Activated CD4-positive, alpha-beta memory T cell treated with anti-CD3 and anti-CD28 coated beads for 36 hours (primary cell): ENCODE measurements at regions of chr10 and their contacts with region 1.

Region 1: DNA sequence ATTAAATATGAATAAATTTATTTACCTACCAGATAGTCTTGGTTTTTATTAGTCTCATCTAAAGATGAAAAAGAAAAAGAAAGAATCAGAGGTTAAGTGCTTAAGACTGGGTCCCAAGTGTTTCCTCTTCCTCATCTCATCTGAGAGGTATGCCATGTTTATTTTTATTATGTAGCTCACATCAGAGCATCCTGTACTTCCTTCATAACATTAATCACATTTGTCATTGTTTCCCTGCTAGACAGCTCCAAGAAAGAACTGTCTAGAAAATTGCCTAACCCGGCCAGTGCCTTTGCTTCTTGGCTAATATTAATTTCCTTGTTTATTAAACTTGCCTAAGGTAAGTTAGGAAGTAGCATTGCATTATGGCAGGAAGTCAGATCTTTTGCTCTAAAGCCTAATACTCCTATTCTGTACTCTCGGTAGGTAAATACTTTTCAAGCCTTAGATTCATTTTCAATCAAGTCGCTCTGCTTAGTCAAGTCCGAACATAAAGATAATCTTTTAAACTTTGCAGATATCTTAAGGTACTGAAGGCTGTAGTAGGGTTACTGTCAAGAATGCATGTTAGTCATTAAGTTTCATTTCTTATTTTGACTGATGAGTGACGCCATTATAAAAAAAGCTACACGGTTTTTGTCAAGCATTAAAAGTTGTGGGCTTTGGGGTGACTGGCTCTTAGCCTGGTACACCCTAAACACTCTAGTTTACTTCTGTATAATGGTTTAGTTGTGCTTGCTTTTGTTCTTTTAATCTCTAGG is 47.4 kb downstream of the ZMYND11 start:
- DNase-seq: peak; percentile 36
- H3K4me3 Mint-ChIP-seq: peak overlapping the region; percentile 24
- H3K27ac Mint-ChIP-seq: peak overlapping the region; percentile 80
- H3K4me1 Mint-ChIP-seq: peaks cover 36% of the 10 kb centered on the region
- H3K27me3 Mint-ChIP-seq: no peaks in the 10 kb centered on the region

Region 2: GRCh38 chr10:201328-201771 is 18.7 kb after region 1 on chr10:
- CTCF ChIA-PET with region 1: no interaction called
- POLR2A ChIA-PET with region 1: interaction called, 3 read pairs
- intact Hi-C with region 1: loop called (anchors 1 kb)
- DNase-seq: no peak
- H3K4me3 Mint-ChIP-seq: no peak overlapping the region
- H3K27ac Mint-ChIP-seq: peak overlapping the region; percentile 25
- H3K4me1 Mint-ChIP-seq: peaks cover 20% of the 10 kb centered on the region
- H3K27me3 Mint-ChIP-seq: no peaks in the 10 kb centered on the region

Region 3: DNA sequence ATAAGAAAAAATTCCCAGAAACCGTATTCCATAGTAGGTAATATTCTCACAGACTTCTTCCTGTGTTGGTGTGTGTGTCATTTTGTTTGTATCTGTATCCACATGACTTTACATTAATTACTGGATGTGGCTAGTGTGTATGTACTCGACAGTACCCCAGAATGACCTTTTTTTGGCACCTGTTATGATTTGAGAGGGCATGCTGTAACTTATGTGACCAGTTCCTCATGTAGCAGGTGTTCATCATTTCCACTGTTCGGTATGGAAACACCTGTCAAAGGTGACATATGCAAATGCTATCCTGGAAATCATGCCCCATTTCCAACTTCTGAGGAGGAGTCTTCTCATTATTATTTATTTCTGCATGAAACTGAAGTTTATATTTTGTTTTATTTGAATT is 42.0 kb after region 1 on chr10:
- CTCF ChIA-PET with region 1: interaction called, 5 read pairs
- POLR2A ChIA-PET with region 1: no interaction called
- intact Hi-C with region 1: loop called (anchors 5 kb)
- DNase-seq: no peak
- H3K4me3 Mint-ChIP-seq: no peak overlapping the region
- H3K27ac Mint-ChIP-seq: no peak overlapping the region
- H3K4me1 Mint-ChIP-seq: peaks cover 20% of the 10 kb centered on the region
- H3K27me3 Mint-ChIP-seq: no peaks in the 10 kb centered on the region

Region 4: GRCh38 chr10:329361-330099 is 146.9 kb after region 1 on chr10:
- CTCF ChIA-PET with region 1: interaction called, 3 read pairs
- POLR2A ChIA-PET with region 1: no interaction called
- intact Hi-C with region 1: loop called (anchors 5 kb)
- DNase-seq: peak; percentile 61
- H3K4me3 Mint-ChIP-seq: peak overlapping the region; percentile 33
- H3K27ac Mint-ChIP-seq: peak overlapping the region; percentile 60
- H3K4me1 Mint-ChIP-seq: peaks cover 35% of the 10 kb centered on the region
- H3K27me3 Mint-ChIP-seq: no peaks in the 10 kb centered on the region

Region 5: GRCh38 chr10:361203-362081 is 178.8 kb after region 1 on chr10:
- CTCF ChIA-PET with region 1: no interaction called
- POLR2A ChIA-PET with region 1: no interaction called
- intact Hi-C with region 1: no loop called
- DNase-seq: no peak
- H3K4me3 Mint-ChIP-seq: no peak overlapping the region
- H3K27ac Mint-ChIP-seq: no peak overlapping the region
- H3K4me1 Mint-ChIP-seq: no peaks in the 10 kb centered on the region
- H3K27me3 Mint-ChIP-seq: no peaks in the 10 kb centered on the region